ENCODE measurements at regions of chr1 and their contacts with region 1.

Region 1: DNA sequence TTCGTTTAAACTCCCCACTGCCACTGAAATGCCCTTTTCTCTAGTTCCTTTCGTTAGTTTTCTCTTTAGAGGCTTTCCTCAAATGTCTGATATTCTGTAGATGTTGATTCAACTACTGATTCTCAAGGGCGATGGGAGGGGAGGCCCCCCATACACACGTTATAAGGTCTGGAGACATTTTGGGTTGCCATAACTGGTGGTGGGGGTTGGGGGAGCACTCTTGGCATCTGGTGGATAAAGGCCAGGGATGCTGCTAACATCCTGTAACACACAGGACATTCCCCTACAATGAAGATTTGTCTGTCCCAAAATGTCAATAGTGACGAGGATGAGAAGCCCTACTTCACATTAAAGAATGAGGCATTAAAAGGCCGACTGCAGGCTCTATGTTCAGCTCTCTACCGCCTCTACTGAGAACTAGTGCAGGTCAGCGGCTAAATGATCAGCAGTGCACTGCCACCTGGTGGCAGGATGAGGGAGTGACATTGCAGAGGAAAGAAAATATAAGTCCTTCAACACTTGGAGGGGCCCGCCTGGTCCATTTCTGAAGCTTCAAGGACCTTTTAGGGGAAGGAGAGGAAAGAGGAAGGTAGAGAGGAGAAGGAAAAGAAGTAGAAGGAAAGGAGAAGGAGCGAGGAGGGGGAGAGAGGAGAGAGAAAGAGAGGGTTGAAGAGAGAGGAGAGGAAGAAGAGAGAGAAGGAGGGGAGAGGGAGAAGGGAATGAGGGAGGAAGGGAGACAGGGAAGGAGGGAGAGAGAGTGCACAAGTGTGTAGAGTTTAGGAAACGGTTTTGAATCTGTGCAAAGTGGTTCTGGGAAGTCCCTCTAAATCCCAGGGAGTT is 29.4 kb downstream of the ALG14 start:
- DNase-seq: peak; percentile 91
- H3K4me3 ChIP-seq: no peak overlapping the region
- H3K27ac ChIP-seq: no peak overlapping the region
- H3K4me1 ChIP-seq: no peaks in the 10 kb centered on the region
- H3K27me3 ChIP-seq: no peaks in the 10 kb centered on the region
- CTCF ChIP-seq: peak; percentile 100

Region 2: GRCh38 chr1:94805912-94806311 is 237.4 kb before region 1 on chr1:
- CTCF ChIA-PET with region 1: interaction called, 4 read pairs
- POLR2A ChIA-PET with region 1: no interaction called
- intact Hi-C with region 1: loop called (anchors 5 kb)
- DNase-seq: peak; percentile 70
- H3K4me3 ChIP-seq: no peak overlapping the region
- H3K27ac ChIP-seq: no peak overlapping the region
- H3K4me1 ChIP-seq: peaks cover 14% of the 10 kb centered on the region
- H3K27me3 ChIP-seq: no peaks in the 10 kb centered on the region
- CTCF ChIP-seq: peak; percentile 93

Region 3: DNA sequence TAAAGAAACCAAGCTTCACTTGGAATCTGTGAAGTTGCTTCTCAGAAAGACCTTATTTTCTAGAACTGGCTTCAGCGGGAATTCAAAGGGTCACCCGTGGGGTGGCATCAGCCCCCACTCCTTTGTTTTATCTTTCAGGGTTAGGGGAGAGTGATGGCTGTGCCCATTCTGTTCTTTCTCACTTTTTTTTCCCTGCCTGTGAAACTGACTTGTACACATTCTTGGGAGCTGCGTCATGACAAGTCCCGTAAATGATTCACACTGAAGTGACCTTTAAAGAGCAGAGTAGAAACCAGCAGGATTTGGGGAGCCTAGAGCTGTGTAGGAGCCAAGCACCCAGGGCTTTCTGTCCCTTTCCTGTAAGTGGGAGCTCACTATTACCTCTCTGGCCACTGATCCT is 179.4 kb before region 1 on chr1:
- CTCF ChIA-PET with region 1: interaction called, 10 read pairs
- POLR2A ChIA-PET with region 1: no interaction called
- intact Hi-C with region 1: no loop called
- DNase-seq: peak; percentile 22
- H3K4me3 ChIP-seq: no peak overlapping the region
- H3K27ac ChIP-seq: no peak overlapping the region
- H3K4me1 ChIP-seq: peaks cover 6% of the 10 kb centered on the region
- H3K27me3 ChIP-seq: no peaks in the 10 kb centered on the region
- CTCF ChIP-seq: no peak

Region 4: DNA sequence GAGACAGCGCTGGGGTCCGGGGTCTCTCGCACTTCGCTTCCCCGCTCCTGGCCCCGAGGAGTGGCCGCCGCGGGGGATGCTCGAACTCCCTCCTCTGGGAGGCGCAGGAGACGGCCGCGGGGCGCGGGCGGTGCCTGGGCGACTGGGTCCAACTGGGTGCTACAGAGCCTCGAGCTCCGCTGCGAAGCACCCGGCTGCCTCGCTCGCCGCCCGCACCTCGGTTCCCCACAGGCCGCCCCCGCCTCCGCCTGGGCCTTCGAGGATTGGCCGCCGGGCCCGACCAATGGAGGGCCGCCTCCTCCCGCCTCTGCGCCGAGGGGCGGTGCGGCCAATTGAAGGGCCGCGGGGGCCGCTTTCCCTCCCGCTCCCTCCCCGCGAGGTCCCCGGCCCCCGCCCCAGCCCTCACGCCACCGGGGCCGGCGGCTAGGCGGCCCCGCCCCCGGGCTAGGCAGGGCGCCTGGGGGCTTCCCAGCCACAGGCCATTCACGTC is 116.4 kb before region 1 on chr1 and contains the start of gene CNN3:
- CTCF ChIA-PET with region 1: interaction called, 3 read pairs
- POLR2A ChIA-PET with region 1: no interaction called
- intact Hi-C with region 1: loop called (anchors 1 kb)
- DNase-seq: peak; percentile 96
- H3K4me3 ChIP-seq: peak within 1 kb of the TSS; percentile 61
- H3K27ac ChIP-seq: peak within 1 kb of the TSS; percentile 86
- H3K4me1 ChIP-seq: peaks cover 51% of the 10 kb centered on the region
- H3K27me3 ChIP-seq: no peaks in the 10 kb centered on the region
- CTCF ChIP-seq: no peak
- total RNA-seq, gene CNN3: 233 and 260 TPM in 2 replicates

Region 5: DNA sequence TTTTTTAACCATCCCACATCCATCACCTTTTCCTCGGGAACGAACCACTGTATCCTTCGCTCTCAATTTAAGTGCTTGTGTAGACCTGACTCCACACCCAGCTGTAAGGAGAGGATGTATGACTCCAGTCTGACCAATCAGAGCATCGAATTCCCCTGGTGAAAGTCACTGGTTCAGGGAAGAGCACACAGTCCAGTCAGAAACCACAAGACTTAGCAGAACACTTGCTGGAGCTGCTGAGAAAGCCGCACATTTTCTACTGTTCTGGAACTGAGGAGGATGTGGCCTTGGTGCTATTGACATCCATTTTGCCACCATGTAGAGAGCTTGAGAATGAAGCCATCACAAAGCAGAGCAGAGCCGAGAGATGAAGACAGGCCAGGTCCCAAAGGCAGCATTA is 56.6 kb before region 1 on chr1:
- CTCF ChIA-PET with region 1: no interaction called
- POLR2A ChIA-PET with region 1: no interaction called
- intact Hi-C with region 1: no loop called
- DNase-seq: no peak
- H3K4me3 ChIP-seq: no peak overlapping the region
- H3K27ac ChIP-seq: no peak overlapping the region
- H3K4me1 ChIP-seq: peaks cover 10% of the 10 kb centered on the region
- H3K27me3 ChIP-seq: no peaks in the 10 kb centered on the region
- CTCF ChIP-seq: no peak

Measured in A673 (cell line).